ENCODE measurements at regions of chr19 and their contacts with region 1.

Region 1: GRCh38 chr19:53867225-53868090 is at the start of gene MYADM:
- DNase-seq: peak; percentile 97
- ATAC-seq: peak; percentile 81
- H3K4me3 ChIP-seq: peak within 1 kb of the TSS; percentile 95
- H3K27ac ChIP-seq: peak within 1 kb of the TSS; percentile 97
- H3K4me1 ChIP-seq: peaks cover 7% of the 10 kb centered on the region
- H3K27me3 ChIP-seq: no peaks in the 10 kb centered on the region
- CTCF ChIP-seq: no peak
- POLR2A ChIP-seq: peak; percentile 97
- RAD21 ChIP-seq: no peak
- total RNA-seq, gene MYADM: 4.8 and 5.3 TPM in 2 replicates

Region 2: GRCh38 chr19:53455828-53456227 is 411.6 kb before region 1 on chr19:
- CTCF ChIA-PET with region 1: no interaction called
- POLR2A ChIA-PET with region 1: no interaction called
- dilution Hi-C with region 1: no loop called
- in situ Hi-C with region 1: no loop called
- intact Hi-C with region 1: no loop called
- DNase-seq: no peak
- ATAC-seq: no peak
- H3K4me3 ChIP-seq: no peak overlapping the region
- H3K27ac ChIP-seq: no peak overlapping the region
- H3K4me1 ChIP-seq: no peaks in the 10 kb centered on the region
- H3K27me3 ChIP-seq: no peaks in the 10 kb centered on the region
- CTCF ChIP-seq: no peak
- POLR2A ChIP-seq: no peak
- RAD21 ChIP-seq: no peak

Region 3: DNA sequence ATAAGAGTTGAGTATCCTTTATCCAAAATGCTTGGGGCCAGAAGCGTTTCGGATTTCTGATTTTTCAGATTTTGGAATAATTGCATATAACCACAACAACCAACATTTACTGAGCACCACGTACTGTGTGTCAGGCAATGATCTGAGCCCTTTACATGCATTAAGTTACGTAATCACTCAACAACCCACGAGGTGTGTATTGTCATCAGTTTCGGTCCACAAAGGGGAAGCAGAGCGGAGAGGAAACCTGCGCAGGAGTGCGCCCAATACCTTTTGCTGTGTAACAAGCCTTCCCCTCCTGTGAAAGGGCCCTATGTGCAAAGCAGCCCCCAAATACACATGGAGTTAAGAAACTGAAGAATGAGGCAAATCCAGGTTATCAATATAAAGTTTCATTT is 22.6 kb before region 1 on chr19:
- CTCF ChIA-PET with region 1: no interaction called
- POLR2A ChIA-PET with region 1: interaction called, 3 read pairs
- dilution Hi-C with region 1: no loop called
- in situ Hi-C with region 1: no loop called
- intact Hi-C with region 1: loop called (anchors 1 kb)
- DNase-seq: no peak
- ATAC-seq: no peak
- H3K4me3 ChIP-seq: no peak overlapping the region
- H3K27ac ChIP-seq: no peak overlapping the region
- H3K4me1 ChIP-seq: peaks cover 3% of the 10 kb centered on the region; the same call in 1 of the 2 replicates
- H3K27me3 ChIP-seq: no peaks in the 10 kb centered on the region
- CTCF ChIP-seq: no peak
- POLR2A ChIP-seq: no peak
- RAD21 ChIP-seq: no peak

Region 4: DNA sequence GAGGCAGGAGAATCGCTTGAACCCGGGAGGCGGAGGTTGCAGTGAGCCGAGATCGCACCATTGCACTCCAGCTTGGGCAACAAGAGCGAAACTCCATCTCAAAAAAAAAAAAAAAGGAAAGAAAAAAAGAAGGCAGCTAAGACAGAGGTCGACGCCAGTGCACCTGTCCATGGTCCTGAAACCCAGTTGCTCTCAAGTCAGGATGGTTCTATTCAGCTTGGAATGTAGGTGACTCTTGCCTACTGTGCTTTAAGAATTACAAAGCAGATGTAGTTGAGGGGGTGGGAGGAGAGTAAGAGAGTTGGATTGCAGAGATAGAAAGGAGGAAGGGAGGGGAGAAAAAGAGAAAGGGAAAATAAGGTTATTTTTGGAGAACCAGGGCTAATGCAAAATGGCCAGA is 60.3 kb after region 1 on chr19:
- CTCF ChIA-PET with region 1: no interaction called
- POLR2A ChIA-PET with region 1: no interaction called
- dilution Hi-C with region 1: no loop called
- in situ Hi-C with region 1: no loop called
- intact Hi-C with region 1: no loop called
- DNase-seq: peak; percentile 64
- ATAC-seq: peak; percentile 75
- H3K4me3 ChIP-seq: no peak overlapping the region
- H3K27ac ChIP-seq: no peak overlapping the region
- H3K4me1 ChIP-seq: no peaks in the 10 kb centered on the region
- H3K27me3 ChIP-seq: no peaks in the 10 kb centered on the region
- CTCF ChIP-seq: no peak
- POLR2A ChIP-seq: no peak
- RAD21 ChIP-seq: no peak

Region 5: GRCh38 chr19:54102421-54103169 is 235.1 kb after region 1 on chr19 and contains the start of gene NDUFA3:
- CTCF ChIA-PET with region 1: no interaction called
- POLR2A ChIA-PET with region 1: no interaction called
- dilution Hi-C with region 1: no loop called
- in situ Hi-C with region 1: no loop called
- intact Hi-C with region 1: loop called (anchors 10 kb)
- DNase-seq: peak; percentile 98
- ATAC-seq: peak; percentile 100
- H3K4me3 ChIP-seq: peak within 1 kb of the TSS; percentile 58
- H3K27ac ChIP-seq: peak within 1 kb of the TSS; percentile 53
- H3K4me1 ChIP-seq: no peaks in the 10 kb centered on the region
- H3K27me3 ChIP-seq: no peaks in the 10 kb centered on the region
- CTCF ChIP-seq: no peak
- POLR2A ChIP-seq: no peak
- RAD21 ChIP-seq: no peak
- total RNA-seq, gene NDUFA3: 7.9 and 24.7 TPM in 2 replicates